ENCODE measurements at regions of chr12 and their contacts with region 1.

Region 1: DNA sequence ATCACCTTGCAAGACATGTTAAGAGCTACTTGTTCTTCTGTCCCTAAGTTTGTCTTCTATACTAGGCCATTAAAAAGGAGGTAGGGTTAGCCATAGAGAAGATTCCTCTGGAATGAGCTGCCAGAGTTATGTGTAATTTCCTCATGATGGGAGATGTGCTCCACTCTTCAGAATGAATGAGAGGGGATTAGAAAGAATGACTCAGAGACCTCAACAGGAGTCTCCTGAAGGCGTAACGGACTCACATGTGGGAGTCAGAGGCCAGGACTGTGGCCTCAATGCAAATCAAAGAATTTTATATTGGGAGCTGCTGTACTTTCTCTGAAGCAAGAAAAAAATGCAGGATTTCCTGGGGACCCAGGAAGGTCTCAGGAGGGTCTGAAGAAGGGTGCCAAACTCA is 87.8 kb upstream of the ATXN7L3B start:
- DNase-seq: no peak
- ATAC-seq: no peak

Region 2: GRCh38 chr12:74119811-74120362 is 330.0 kb before region 1 on chr12:
- intact Hi-C with region 1: no loop called
- DNase-seq: no peak
- ATAC-seq: no peak

Region 3: GRCh38 chr12:74285773-74286172 is 164.1 kb before region 1 on chr12:
- intact Hi-C with region 1: no loop called
- DNase-seq: no peak
- ATAC-seq: no peak

Region 4: DNA sequence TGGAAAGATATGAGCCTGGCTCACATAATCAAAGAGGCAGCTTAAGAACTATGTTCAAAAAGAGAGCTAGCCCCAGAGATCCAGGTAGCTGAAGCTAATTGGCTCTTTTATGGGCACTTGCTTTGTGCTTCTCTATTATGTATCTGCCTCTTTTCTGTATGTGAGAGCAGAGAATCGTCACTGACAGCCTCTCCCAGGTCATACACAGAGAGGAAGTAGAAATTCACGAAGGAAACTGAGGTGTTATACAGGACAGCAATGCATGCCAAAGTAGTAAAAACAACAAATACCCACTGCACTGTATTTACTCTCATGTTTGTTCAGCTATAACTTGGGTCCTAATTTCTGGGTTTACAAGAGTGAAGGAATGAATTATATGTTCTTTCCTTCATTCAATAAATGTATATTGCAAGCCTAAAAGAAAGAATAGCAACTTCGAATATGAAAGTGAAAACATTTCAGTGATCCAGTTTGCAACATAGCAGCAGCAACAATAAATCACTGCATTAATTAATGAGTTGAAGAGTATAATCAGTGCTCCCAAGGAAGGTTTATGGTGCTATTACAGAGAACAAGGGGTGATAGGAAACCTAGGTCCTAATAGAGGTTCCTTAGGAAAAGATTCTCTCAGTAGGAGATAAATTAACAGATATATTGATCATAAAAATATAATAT is 40.7 kb after region 1 on chr12:
- intact Hi-C with region 1: loop called (anchors 2 kb)
- DNase-seq: no peak
- ATAC-seq: no peak

Region 5: GRCh38 chr12:74957231-74957630 is 507.4 kb after region 1 on chr12:
- intact Hi-C with region 1: no loop called
- DNase-seq: no peak
- ATAC-seq: no peak